Naive thymus-derived CD4-positive, alpha-beta T cell (primary cell): ENCODE measurements at regions of chr5 and their contacts with region 1.

Region 1: GRCh38 chr5:36241631-36242533 is at the start of gene NADK2:
- DNase-seq: peak; percentile 88 to 96 (median 93)
- ATAC-seq: peak; percentile 92
- H3K4me3 ChIP-seq: peak within 1 kb of the TSS; percentile 78
- H3K4me3 Mint-ChIP-seq: peak within 1 kb of the TSS; percentile 84 to 95 (median 92)
- H3K27ac ChIP-seq: peak within 1 kb of the TSS; percentile 97
- H3K27ac Mint-ChIP-seq: peak within 1 kb of the TSS; percentile 94 to 97 (median 95)
- H3K4me1 ChIP-seq: peaks cover 12 to 14% of the 10 kb centered on the region in 2 donors
- H3K4me1 Mint-ChIP-seq: peaks cover 24 to 64% (median 52%) of the 10 kb centered on the region in 7 donors
- H3K27me3 ChIP-seq: no peaks in the 10 kb centered on the region
- H3K27me3 Mint-ChIP-seq: peaks cover 0 to 5% (median 0%) of the 10 kb centered on the region in 5 donors
- total RNA-seq, gene NADK2: 11.3 to 17.8 (median 13.0) TPM

Region 2: DNA sequence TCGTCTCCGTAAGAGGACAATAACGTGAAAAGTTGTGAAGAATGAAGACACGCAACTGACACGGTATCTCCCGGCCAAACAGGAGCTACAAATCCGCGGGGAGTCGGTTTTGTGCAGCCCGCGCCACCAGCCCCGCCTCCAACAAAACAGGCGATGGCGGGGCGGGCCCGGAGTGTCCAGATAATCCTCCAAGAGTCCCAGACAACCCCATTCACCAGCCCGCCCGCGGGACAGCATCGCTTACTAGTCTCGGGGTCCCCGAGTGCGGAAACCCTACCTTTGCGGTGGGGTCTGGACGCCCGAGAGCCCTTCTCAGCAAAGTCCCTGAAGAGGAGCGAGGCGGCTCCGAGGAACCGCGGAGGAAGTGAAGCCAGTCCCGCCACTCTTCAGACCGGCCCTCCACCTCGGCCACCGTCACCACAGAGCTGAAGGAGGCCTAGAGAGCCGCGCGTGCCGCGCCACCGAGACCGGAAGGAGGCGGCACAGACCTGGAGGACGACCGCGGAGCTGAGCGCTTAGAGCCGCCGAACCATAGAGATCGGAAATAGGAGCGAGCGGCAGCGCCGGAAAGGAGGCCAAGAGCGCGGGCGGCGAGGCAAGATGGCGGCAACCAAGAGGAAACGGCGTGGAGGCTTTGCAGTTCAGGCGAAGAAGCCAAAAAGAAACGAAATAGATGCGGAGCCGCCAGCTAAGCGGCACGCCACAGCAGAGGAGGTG is 1326.6 kb before region 1 on chr5 and contains the starts of genes BRIX1 and RAD1:
- CTCF ChIA-PET with region 1: no interaction called
- POLR2A ChIA-PET with region 1: no interaction called
- intact Hi-C with region 1: loop called in 1 of 2 experiments (anchors 1 kb)
- DNase-seq: peak; percentile 86 to 95 (median 92)
- ATAC-seq: peak; percentile 99
- H3K4me3 ChIP-seq: peak within 1 kb of the TSS; percentile 99
- H3K4me3 Mint-ChIP-seq: peak within 1 kb of the TSS in 3 of 10 donors; percentile 56 to 80 (median 60)
- H3K27ac ChIP-seq: peak within 1 kb of the TSS; percentile 84
- H3K27ac Mint-ChIP-seq: peak within 1 kb of the TSS in 2 of 9 donors; percentile 59 to 69
- H3K4me1 ChIP-seq: peaks cover 19 to 34% of the 10 kb centered on the region in 2 donors
- H3K4me1 Mint-ChIP-seq: peaks cover 17 to 41% (median 35%) of the 10 kb centered on the region in 7 donors
- H3K27me3 ChIP-seq: no peaks in the 10 kb centered on the region
- H3K27me3 Mint-ChIP-seq: no peaks in the 10 kb centered on the region
- total RNA-seq, gene BRIX1: 13.4 to 45.2 (median 26.8) TPM
- total RNA-seq, gene RAD1: 19.3 to 29.6 (median 24.6) TPM

Region 3: DNA sequence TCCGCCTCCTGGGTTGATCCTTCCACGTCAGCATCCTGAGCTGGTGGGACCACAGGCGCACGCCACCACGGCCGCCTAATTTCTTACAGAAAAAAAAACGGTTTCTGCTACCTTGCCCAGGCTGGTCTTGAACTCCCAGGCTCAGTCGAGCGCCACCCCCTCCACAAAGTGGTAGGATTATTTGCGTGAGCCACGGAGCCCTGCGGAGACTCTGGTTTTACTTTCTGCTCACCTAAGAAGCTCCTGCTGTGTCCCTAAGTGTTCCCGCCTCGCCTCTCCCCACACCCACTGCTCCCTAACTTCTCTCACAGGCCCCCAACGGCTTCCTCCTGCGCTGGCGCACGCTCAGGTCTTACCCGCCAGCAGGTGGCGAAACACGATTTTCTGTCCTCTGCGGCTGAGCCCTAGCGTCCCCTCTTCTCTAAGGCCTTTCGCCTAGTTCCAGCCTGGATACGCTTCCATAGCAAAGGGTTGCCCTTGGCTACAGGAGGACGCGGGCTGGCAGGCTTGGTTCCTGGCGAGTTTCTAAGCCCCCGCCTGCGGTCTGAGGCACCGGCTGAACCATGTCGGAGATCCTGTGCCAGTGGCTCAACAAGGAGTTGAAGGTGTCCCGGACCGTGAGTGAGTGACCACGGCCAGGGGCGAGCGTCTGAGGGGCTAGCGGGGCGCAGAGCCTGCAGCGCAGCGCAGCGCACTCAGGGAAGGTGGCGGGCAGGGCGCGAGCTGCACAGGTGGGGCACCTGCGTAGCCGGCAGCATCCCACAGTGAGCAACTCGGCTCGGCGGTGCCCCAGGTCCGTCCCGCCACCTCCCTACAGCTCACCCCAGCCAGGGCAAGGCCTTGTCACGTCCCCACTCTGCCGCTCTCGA is 624.2 kb before region 1 on chr5 and contains the start of gene SPEF2:
- CTCF ChIA-PET with region 1: no interaction called
- POLR2A ChIA-PET with region 1: no interaction called
- intact Hi-C with region 1: loop called in 1 of 2 experiments (anchors 1 kb)
- DNase-seq: peak; percentile 57 to 76 (median 71)
- ATAC-seq: peak; percentile 95
- H3K4me3 ChIP-seq: peak within 1 kb of the TSS; percentile 95
- H3K4me3 Mint-ChIP-seq: peak within 1 kb of the TSS; percentile 91 to 96 (median 94)
- H3K27ac ChIP-seq: peak within 1 kb of the TSS; percentile 27
- H3K27ac Mint-ChIP-seq: peak within 1 kb of the TSS; percentile 79 to 96 (median 89)
- H3K4me1 ChIP-seq: peaks cover 4 to 12% of the 10 kb centered on the region in 2 donors
- H3K4me1 Mint-ChIP-seq: peaks cover 14 to 34% (median 26%) of the 10 kb centered on the region in 7 donors
- H3K27me3 ChIP-seq: no peaks in the 10 kb centered on the region
- H3K27me3 Mint-ChIP-seq: no peaks in the 10 kb centered on the region
- total RNA-seq, gene SPEF2: 7.1 to 13.5 (median 9.9) TPM

Region 4: DNA sequence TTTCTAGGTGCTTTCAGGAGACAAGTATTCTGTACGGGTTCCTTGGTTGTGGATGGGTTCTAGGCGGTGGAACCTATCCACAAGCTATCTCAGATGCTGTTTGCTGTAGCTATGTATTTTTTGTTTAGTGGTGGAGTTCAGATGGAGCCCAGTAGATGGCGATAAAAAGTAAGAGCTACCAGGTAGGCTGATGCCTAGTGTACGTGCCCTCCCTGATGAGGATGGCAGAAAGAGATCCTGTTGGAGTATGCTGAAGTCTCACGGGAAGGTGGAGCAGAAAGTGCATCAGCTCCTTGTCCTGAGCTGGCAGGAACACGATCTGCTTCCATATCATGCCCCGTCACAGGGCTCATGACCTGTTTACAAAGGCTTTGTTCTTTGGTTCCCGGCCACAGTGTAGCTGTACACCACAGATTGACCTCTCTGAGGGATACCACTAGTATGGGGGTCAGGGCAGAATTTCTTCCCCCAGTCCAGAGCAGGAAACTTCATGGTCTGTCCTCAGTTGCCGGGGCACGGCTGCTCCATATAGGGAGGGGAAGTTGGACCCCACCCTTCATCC is 162.6 kb before region 1 on chr5:
- CTCF ChIA-PET with region 1: no interaction called
- POLR2A ChIA-PET with region 1: no interaction called
- intact Hi-C with region 1: loop called in 1 of 2 experiments (anchors 10 kb)
- DNase-seq: peak in 6 of 9 donors; percentile 14 to 36 (median 29)
- ATAC-seq: peak; percentile 82
- H3K4me3 ChIP-seq: no peak overlapping the region
- H3K4me3 Mint-ChIP-seq: no peak overlapping the region
- H3K27ac ChIP-seq: no peak overlapping the region
- H3K27ac Mint-ChIP-seq: no peak overlapping the region
- H3K4me1 ChIP-seq: no peaks in the 10 kb centered on the region
- H3K4me1 Mint-ChIP-seq: no peaks in the 10 kb centered on the region
- H3K27me3 ChIP-seq: no peaks in the 10 kb centered on the region
- H3K27me3 Mint-ChIP-seq: peaks cover 17 to 51% (median 27%) of the 10 kb centered on the region in 5 donors

Region 5: GRCh38 chr5:36602711-36603321 is 360.9 kb after region 1 on chr5:
- CTCF ChIA-PET with region 1: no interaction called
- POLR2A ChIA-PET with region 1: no interaction called
- intact Hi-C with region 1: no loop called
- DNase-seq: no peak
- ATAC-seq: peak; percentile 44
- H3K4me3 ChIP-seq: no peak overlapping the region
- H3K4me3 Mint-ChIP-seq: no peak overlapping the region
- H3K27ac ChIP-seq: no peak overlapping the region
- H3K27ac Mint-ChIP-seq: no peak overlapping the region
- H3K4me1 ChIP-seq: no peaks in the 10 kb centered on the region
- H3K4me1 Mint-ChIP-seq: peaks cover 8 to 17% (median 14%) of the 10 kb centered on the region in 7 donors
- H3K27me3 ChIP-seq: no peaks in the 10 kb centered on the region
- H3K27me3 Mint-ChIP-seq: peaks cover 38 to 49% (median 42%) of the 10 kb centered on the region in 5 donors

Region 6: GRCh38 chr5:37370864-37371726 is 1129.2 kb after region 1 on chr5 and contains the start of gene NUP155:
- CTCF ChIA-PET with region 1: no interaction called
- POLR2A ChIA-PET with region 1: no interaction called
- intact Hi-C with region 1: loop called (anchors 1 kb)
- DNase-seq: peak; percentile 64 to 92 (median 87)
- ATAC-seq: peak; percentile 97
- H3K4me3 ChIP-seq: peak within 1 kb of the TSS; percentile 95
- H3K4me3 Mint-ChIP-seq: peak within 1 kb of the TSS; percentile 92 to 99 (median 94)
- H3K27ac ChIP-seq: peak within 1 kb of the TSS; percentile 89
- H3K27ac Mint-ChIP-seq: peak within 1 kb of the TSS; percentile 87 to 98 (median 96)
- H3K4me1 ChIP-seq: peaks cover 21 to 22% of the 10 kb centered on the region in 2 donors
- H3K4me1 Mint-ChIP-seq: peaks cover 27 to 48% (median 36%) of the 10 kb centered on the region in 7 donors
- H3K27me3 ChIP-seq: no peaks in the 10 kb centered on the region
- H3K27me3 Mint-ChIP-seq: no peaks in the 10 kb centered on the region
- total RNA-seq, gene NUP155: 21.3 to 51.2 (median 26.4) TPM